Spleen (tissue), 13 donors: ENCODE measurements at regions of chr9 and their contacts with region 1.

Region 1: GRCh38 chr9:95127249-95128176 is 190.0 kb downstream of the FANCC start:
- DNase-seq: peak; percentile 92
- H3K4me3 ChIP-seq: peak overlapping the region in 4 of 8 donors; percentile 7 to 51 (median 20)
- H3K27ac ChIP-seq: no peak overlapping the region
- H3K4me1 ChIP-seq: peaks cover 0 to 11% (median 6%) of the 10 kb centered on the region in 6 donors
- H3K27me3 ChIP-seq: no peaks in the 10 kb centered on the region
- CTCF ChIP-seq: peak; percentile 74 to 94 (median 90)
- POLR2A ChIP-seq: no peak

Region 2: DNA sequence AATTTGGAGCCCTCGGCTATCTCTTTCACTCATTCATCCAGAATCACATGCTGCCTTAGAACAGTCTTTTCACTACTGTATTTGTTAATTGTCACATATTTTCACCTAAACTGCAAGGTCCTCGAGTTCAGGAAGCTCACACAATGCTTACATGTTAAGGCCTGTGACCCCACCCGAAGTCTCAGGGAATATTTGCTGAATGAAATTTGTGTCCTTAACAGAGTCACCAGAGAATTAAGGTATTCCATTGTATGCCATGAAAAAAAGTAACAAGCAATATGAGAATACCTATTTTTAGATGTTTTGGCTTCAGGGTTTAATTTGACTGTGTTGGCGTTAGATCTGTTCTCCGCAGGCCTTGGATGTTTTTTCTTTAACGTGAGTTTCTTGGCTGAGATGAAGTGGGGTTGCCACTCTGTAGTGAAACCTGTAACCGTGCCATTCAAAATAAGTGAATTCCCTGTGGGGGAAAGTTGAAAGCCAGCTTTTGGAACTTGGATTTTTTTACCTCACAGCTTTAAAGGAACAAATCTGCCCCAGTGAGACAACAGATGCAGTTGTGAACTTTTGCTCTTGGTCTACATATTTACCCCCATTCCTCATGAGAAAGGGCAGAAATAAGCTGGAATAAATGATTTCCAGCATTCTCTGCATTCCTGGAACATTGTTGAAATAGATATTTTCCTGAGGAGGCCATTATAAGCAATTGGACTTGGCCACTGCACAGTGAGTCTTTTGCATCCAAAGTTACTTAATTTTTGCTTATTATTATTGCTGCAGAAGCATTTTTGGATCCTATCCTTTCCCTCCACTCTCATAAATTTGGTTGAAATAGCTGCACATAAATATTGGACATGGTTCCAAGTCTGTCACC is 452.3 kb before region 1 on chr9:
- intact Hi-C with region 1: loop called (anchors 5 kb)
- DNase-seq: no peak
- H3K4me3 ChIP-seq: no peak overlapping the region
- H3K27ac ChIP-seq: no peak overlapping the region
- H3K4me1 ChIP-seq: peaks cover 0 to 4% (median 0%) of the 10 kb centered on the region in 6 donors
- H3K27me3 ChIP-seq: peaks cover 0 to 9% (median 0%) of the 10 kb centered on the region in 7 donors
- CTCF ChIP-seq: no peak
- POLR2A ChIP-seq: no peak

Region 3: GRCh38 chr9:94783102-94783664 is 344.3 kb before region 1 on chr9:
- intact Hi-C with region 1: loop called (anchors 5 kb)
- DNase-seq: no peak
- H3K4me3 ChIP-seq: no peak overlapping the region
- H3K27ac ChIP-seq: peak overlapping the region in 5 of 8 donors; percentile 17 to 46 (median 29)
- H3K4me1 ChIP-seq: peaks cover 0 to 9% (median 6%) of the 10 kb centered on the region in 6 donors
- H3K27me3 ChIP-seq: no peaks in the 10 kb centered on the region
- CTCF ChIP-seq: peak in 9 of 11 experiments; percentile 32 to 73 (median 56)
- POLR2A ChIP-seq: no peak

Region 4: DNA sequence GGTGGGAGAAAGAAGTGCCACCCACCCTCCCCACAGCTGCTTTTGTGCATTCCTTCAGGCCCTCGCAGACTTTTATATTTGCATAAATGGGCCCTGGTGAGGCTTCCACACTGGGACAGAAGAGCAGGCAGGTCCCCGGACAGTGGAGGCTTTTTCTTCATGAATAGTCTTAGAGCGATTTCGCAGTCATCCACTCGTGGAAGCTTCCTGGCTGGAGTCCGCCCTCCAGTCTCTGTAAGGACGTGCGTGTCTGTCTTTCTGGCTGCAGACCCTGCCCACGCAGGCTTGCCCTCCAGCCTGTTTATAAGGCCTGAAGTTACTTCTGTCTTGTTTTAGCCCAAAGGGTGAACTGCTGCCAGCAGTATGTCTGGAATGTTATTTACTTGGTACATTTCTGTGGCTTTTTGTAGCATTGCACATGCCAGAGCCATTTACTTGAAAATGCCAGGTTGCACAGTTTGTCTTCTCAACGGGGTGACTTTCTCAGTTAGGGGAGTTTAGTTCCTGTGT is 205.4 kb before region 1 on chr9:
- intact Hi-C with region 1: no loop called
- DNase-seq: no peak
- H3K4me3 ChIP-seq: no peak overlapping the region
- H3K27ac ChIP-seq: peak overlapping the region; percentile 6 to 82 (median 73)
- H3K4me1 ChIP-seq: peaks cover 7 to 40% (median 15%) of the 10 kb centered on the region in 6 donors
- H3K27me3 ChIP-seq: no peaks in the 10 kb centered on the region
- CTCF ChIP-seq: no peak
- POLR2A ChIP-seq: no peak